ENCODE measurements at regions of chr15 and their contacts with region 1.

Region 1: GRCh38 chr15:45198337-45199135 is 10.8 kb upstream of the SHF start:
- DNase-seq: peak; percentile 94
- H3K4me3 Mint-ChIP-seq: no peak overlapping the region
- H3K27ac Mint-ChIP-seq: no peak overlapping the region
- H3K4me1 Mint-ChIP-seq: peaks cover 15% of the 10 kb centered on the region
- H3K27me3 Mint-ChIP-seq: peaks cover 5% of the 10 kb centered on the region

Region 2: GRCh38 chr15:44286814-44287452 is 911.6 kb before region 1 on chr15:
- intact Hi-C with region 1: loop called (anchors 10 kb)
- DNase-seq: no peak
- H3K4me3 Mint-ChIP-seq: peak overlapping the region; percentile 92
- H3K27ac Mint-ChIP-seq: peak overlapping the region; percentile 100
- H3K4me1 Mint-ChIP-seq: peaks cover 44% of the 10 kb centered on the region
- H3K27me3 Mint-ChIP-seq: peaks cover 9% of the 10 kb centered on the region

Region 3: DNA sequence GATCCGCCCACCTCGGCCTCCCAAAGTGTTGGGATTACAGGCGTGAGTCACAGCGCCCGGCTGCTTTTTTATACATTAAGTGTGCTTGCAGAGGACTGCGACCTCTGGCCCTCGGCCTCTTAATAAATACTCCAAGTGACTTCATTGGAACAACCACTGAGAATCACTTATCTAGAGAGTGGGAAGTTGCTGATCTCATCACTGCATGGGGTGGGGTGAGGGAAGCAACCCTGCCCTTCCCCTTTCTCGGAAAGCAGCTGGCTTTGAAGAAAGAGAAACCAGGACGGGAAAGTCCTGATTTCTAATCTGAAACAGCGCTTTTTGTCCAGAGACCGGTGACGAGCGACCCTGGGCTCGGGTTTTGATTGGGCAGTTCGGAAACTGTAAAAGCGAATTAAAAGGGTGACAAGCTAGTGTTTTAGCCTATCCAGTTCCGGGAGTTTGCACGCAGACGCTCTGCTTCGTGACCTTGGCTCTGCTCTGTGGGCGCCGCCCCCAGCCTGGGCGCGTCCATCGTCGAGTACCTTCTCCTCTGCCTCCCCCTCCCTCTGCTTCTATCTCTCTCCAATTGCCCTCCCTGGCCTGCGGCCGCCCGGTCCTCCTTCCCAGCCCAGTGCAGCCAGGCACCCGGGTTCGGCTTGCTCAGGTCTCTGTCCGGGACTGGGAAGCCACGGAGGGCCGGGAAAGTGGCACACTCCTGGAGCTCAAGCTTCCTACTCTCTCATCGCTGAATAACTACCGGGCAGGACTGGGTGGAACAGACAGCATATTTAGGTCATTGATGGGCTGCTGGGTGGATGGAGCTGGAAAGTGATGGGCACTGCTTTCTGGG is 469.7 kb before region 1 on chr15:
- intact Hi-C with region 1: loop called (anchors 5 kb)
- DNase-seq: peak; percentile 96
- H3K4me3 Mint-ChIP-seq: peak overlapping the region; percentile 100
- H3K27ac Mint-ChIP-seq: peak overlapping the region; percentile 99
- H3K4me1 Mint-ChIP-seq: peaks cover 77% of the 10 kb centered on the region
- H3K27me3 Mint-ChIP-seq: no peaks in the 10 kb centered on the region

Region 4: DNA sequence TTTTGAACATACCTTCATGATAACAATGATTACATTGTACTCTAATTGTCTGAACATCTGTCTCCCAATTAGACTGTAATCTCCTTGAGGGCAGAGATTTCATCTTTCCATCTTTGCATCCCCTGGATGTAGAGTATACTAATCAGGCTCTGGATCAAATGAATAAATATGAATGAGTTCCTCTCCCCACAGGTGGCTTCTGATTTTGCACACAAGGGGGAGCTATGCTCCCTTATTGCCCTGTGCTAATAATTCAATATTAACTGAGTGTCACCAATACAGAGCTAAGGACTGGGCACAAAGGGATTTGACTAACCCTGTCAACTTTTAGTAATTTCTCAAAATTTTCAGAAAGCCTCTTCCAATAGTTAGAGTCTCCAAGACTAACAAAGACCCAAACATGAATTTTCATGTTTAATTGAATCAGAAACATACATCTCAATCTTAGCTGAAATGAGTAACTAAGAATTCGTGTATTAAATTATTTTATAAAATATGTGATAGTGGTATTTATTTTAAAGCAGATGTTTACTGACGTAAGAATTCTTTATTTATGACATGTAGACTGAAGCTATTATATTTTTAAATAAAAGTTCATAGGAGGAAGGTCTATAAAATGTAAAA is 71.9 kb before region 1 on chr15:
- intact Hi-C with region 1: loop called (anchors 1 kb)
- DNase-seq: no peak
- H3K4me3 Mint-ChIP-seq: no peak overlapping the region
- H3K27ac Mint-ChIP-seq: no peak overlapping the region
- H3K4me1 Mint-ChIP-seq: no peaks in the 10 kb centered on the region
- H3K27me3 Mint-ChIP-seq: peaks cover 64% of the 10 kb centered on the region

Region 5: GRCh38 chr15:45187894-45188830 is 10.4 kb before region 1 on chr15 and contains the start of gene SHF:
- intact Hi-C with region 1: loop called (anchors 1 kb)
- DNase-seq: peak; percentile 36
- H3K4me3 Mint-ChIP-seq: peak within 1 kb of the TSS; percentile 94
- H3K27ac Mint-ChIP-seq: peak within 1 kb of the TSS; percentile 98
- H3K4me1 Mint-ChIP-seq: peaks cover 33% of the 10 kb centered on the region
- H3K27me3 Mint-ChIP-seq: peaks cover 7% of the 10 kb centered on the region
- total RNA-seq, gene SHF: 14.5 and 16.3 TPM in 2 replicates

Region 6: GRCh38 chr15:45225506-45226273 is 27.2 kb after region 1 on chr15:
- intact Hi-C with region 1: no loop called
- DNase-seq: no peak
- H3K4me3 Mint-ChIP-seq: no peak overlapping the region
- H3K27ac Mint-ChIP-seq: no peak overlapping the region
- H3K4me1 Mint-ChIP-seq: no peaks in the 10 kb centered on the region
- H3K27me3 Mint-ChIP-seq: peaks cover 8% of the 10 kb centered on the region

Region 7: DNA sequence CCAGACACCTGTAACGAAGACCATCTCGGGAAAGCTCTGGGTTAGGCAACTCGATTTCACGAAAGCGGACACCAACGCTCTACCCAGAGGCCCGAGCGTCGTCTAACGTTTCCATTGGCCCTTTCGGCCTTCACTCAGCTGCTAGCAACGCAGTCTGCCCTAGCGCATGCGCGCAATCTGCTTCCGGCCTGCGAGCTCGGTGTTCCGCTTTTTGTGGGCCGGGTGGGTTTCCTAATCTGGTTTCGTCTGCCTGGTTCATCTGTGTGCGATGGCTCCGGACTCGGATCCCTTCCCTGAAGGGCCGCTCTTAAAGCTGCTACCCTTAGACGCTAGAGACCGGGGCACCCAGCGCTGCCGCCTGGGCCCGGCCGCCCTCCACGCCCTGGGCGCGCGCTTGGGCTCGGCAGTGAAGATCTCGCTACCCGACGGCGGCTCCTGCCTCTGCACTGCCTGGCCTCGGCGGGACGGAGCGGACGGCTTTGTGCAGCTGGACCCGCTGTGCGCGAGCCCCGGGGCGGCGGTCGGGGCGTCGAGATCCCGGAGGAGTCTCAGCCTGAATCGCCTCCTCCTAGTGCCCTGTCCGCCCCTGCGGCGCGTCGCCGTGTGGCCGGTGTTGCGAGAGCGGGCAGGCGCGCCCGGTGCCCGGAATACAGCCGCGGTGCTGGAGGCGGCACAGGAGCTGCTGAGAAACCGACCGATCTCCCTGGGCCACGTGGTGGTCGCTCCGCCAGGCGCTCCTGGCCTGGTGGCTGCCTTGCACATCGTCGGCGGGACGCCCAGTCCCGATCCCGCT is 203.8 kb after region 1 on chr15:
- intact Hi-C with region 1: loop called (anchors 1 kb)
- DNase-seq: peak; percentile 92
- H3K4me3 Mint-ChIP-seq: peak overlapping the region; percentile 94
- H3K27ac Mint-ChIP-seq: peak overlapping the region; percentile 84
- H3K4me1 Mint-ChIP-seq: peaks cover 40% of the 10 kb centered on the region
- H3K27me3 Mint-ChIP-seq: peaks cover 4% of the 10 kb centered on the region

Region 8: GRCh38 chr15:45587095-45587860 is 388.7 kb after region 1 on chr15 and contains the start of gene BLOC1S6:
- intact Hi-C with region 1: loop called (anchors 1 kb)
- DNase-seq: peak; percentile 84
- H3K4me3 Mint-ChIP-seq: peak within 1 kb of the TSS; percentile 100
- H3K27ac Mint-ChIP-seq: peak within 1 kb of the TSS; percentile 100
- H3K4me1 Mint-ChIP-seq: peaks cover 43% of the 10 kb centered on the region
- H3K27me3 Mint-ChIP-seq: no peaks in the 10 kb centered on the region
- total RNA-seq, gene BLOC1S6: 50.6 TPM in 2 replicates